Posterior vena cava (tissue), 2 donors: ENCODE measurements at regions of chr9 and their contacts with region 1.

Region 1: DNA sequence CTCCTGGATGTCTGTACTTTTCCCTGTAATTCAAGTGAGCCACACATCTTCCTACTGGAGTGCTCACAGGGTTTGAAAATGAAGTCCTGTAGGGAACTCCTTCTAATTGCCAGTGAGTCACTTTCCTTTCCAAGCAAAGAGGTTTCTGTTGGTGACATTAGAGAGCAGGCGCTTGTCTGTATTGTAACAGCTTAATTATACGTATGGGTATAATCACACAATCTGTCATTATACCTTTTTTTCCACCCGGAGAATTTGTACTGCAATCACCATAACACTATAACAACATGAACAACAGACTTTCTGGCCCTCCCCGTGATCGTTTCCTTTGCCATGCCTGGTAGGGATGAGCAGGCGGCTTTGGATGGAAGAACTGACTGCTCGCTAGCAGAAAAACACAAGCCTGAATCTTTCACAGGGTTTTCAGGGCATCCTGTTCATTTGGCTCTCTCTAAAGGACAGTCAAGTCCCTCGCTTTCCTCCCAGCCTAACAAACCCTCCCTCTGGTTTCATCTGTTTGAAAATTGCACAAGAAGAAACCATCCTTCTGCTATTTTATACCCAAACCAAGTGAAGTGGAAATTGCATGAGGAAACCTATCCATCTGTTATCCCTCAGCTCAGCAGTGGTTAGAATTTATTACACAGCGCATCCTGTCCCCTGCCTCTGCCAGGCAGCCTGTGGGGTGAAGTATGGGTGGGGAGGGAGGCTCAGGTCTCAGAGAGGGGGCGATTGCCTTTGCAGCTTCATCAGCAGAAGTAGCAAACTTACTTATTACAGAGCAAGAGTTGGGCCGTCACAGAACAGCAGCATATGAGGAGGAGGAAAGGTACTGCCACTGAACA is 307.0 kb upstream of the TLE4 start:
- DNase-seq: no peak

Region 2: DNA sequence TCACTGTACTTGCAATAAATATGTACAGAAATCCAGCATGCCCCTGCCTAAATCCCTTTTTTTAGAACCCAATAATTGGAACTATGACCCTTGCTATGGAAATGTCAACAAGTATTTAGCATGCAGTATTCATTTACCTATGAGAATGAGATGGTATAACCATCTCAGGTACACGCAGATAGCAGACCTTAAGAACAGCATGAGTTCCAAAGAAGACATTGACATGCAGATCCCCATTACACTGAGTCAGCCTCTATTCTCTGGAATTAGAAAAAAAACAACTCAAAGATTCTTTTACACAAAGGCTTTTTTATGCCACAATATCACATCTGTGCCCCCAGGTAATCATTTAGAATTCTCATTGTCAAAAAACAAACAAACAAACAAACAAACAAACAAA is 18.6 kb before region 1 on chr9:
- intact Hi-C with region 1: loop called in 1 of 2 experiments (anchors 1 kb)
- DNase-seq: no peak

Region 3: GRCh38 chr9:79312686-79313421 is 48.1 kb after region 1 on chr9:
- intact Hi-C with region 1: loop called in 1 of 2 experiments (anchors 1 kb)
- DNase-seq: no peak